ENCODE measurements at regions of chr6 and their contacts with region 1.

Region 1: GRCh38 chr6:32885698-32886286 is 31.8 kb downstream of the PSMB9 start:
- DNase-seq: no peak
- H3K4me3 ChIP-seq: no peak overlapping the region
- H3K27ac ChIP-seq: peak overlapping the region in 1 of 4 donors; percentile 47
- H3K4me1 ChIP-seq: peaks cover 0 to 19% (median 10%) of the 10 kb centered on the region in 3 donors
- H3K27me3 ChIP-seq: no peaks in the 10 kb centered on the region
- CTCF ChIP-seq: peak; percentile 52 to 74 (median 62)
- POLR2A ChIP-seq: no peak

Region 2: GRCh38 chr6:32933636-32934085 is 47.9 kb after region 1 on chr6:
- intact Hi-C with region 1: loop called (anchors 10 kb)
- DNase-seq: no peak
- H3K4me3 ChIP-seq: no peak overlapping the region
- H3K27ac ChIP-seq: no peak overlapping the region
- H3K4me1 ChIP-seq: peaks cover 0 to 9% (median 9%) of the 10 kb centered on the region in 3 donors
- H3K27me3 ChIP-seq: peaks cover 0 to 8% (median 0%) of the 10 kb centered on the region in 4 donors
- CTCF ChIP-seq: peak; percentile 78 to 87 (median 82)
- POLR2A ChIP-seq: no peak

Measured in esophagus squamous epithelium (tissue), 5 donors.